MCF 10A (cell line): ENCODE measurements at regions of chr7 and their contacts with region 1.

Region 1: DNA sequence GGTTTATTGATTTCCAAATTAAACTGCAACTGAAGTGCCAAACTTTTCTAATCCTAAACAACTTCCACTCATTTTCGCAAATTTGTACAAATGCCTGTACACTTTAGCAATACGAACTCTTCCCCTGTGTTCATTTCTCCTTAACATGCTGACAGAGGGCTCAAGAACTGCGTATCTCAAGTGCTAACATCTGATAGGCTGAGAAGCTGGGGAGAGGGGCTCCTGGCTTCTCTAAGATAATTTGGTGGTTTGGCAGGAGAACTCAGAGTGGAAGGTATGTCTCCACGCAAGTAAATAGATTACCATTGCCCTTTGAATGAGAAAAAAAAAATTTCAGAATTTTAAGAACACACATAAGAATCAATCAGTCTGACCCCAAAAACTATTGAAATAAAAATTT is 53.3 kb upstream of the ANLN start:
- DNase-seq: no peak
- H3K4me3 Mint-ChIP-seq: no peak overlapping the region
- H3K27ac Mint-ChIP-seq: no peak overlapping the region
- H3K4me1 Mint-ChIP-seq: no peaks in the 10 kb centered on the region
- H3K27me3 Mint-ChIP-seq: no peaks in the 10 kb centered on the region
- CTCF ChIP-seq: no peak

Region 2: DNA sequence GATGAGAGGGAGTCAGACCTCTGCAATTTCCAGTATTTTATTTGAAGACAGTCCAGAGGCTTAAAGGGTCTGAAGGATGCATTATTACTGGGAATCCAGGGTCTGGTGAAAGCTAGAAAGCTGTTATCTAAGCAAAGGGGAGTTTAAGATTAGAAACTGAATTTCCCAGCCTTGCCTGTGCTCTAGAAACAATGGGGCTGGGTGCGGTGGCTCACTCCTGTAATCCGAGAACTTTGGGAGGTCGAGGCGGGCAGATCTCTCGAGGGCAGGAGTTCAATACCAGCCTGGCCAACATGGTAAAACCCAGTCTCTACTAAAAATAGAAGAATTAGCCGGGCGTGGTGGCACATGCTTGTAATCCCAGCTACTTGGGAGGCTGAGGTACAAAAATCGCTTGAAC is 18.3 kb before region 1 on chr7:
- CTCF ChIA-PET with region 1: interaction called, 42 read pairs
- POLR2A ChIA-PET with region 1: no interaction called
- intact Hi-C with region 1: no loop called
- DNase-seq: no peak
- H3K4me3 Mint-ChIP-seq: no peak overlapping the region
- H3K27ac Mint-ChIP-seq: no peak overlapping the region
- H3K4me1 Mint-ChIP-seq: peaks cover 5% of the 10 kb centered on the region
- H3K27me3 Mint-ChIP-seq: no peaks in the 10 kb centered on the region
- CTCF ChIP-seq: no peak